Ascending aorta (tissue), 2 donors: ENCODE measurements at regions of chr3 and their contacts with region 1.

Region 1: DNA sequence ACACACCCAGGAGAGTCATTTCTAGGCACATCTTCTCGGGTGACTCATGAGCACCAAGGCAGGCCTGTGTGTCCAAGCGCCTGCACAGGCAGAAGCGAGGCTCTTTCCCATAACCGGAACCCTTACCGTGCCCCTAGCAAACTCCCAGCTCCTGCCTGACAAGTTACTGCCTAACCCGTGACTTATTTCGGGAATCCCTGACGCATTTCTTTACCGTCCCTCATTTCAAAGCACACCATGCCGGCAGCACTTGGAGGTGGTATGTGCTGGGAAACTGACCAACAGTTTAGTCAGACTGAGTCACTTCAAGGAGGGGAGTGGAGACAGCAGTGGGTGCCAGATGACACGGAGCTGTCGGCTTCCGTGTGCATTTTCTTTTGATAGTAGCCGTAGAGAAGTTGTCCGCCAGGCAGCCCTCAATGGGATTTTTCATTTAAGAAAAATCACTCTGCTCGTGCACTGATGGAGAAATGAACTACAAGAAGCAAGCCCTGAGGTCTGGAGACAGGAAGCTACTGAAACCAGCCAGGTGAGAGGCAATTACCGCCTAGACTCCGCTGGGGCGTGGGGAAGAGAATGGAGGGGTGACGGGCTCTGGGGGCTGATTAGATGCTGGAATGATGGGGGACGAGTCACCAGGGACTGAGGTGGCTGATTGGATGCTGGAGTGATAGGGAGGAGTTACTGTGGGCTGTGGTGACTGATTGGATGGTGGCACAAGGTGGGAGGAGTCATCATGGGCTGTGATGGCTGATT is 17.2 kb upstream of the HRH1 start:
- DNase-seq: peak; percentile 75 to 96
- H3K4me3 ChIP-seq: peak overlapping the region in 1 of 2 donors; percentile 54
- H3K27ac ChIP-seq: peak overlapping the region; percentile 81 to 93
- H3K4me1 ChIP-seq: peaks cover 4 to 15% of the 10 kb centered on the region in 2 donors
- H3K27me3 ChIP-seq: no peaks in the 10 kb centered on the region
- CTCF ChIP-seq: no peak

Region 2: GRCh38 chr3:10594921-10595320 is 542.1 kb before region 1 on chr3:
- intact Hi-C with region 1: no loop called
- DNase-seq: no peak
- H3K4me3 ChIP-seq: no peak overlapping the region
- H3K27ac ChIP-seq: no peak overlapping the region
- H3K4me1 ChIP-seq: no peaks in the 10 kb centered on the region
- H3K27me3 ChIP-seq: no peaks in the 10 kb centered on the region
- CTCF ChIP-seq: no peak

Region 3: DNA sequence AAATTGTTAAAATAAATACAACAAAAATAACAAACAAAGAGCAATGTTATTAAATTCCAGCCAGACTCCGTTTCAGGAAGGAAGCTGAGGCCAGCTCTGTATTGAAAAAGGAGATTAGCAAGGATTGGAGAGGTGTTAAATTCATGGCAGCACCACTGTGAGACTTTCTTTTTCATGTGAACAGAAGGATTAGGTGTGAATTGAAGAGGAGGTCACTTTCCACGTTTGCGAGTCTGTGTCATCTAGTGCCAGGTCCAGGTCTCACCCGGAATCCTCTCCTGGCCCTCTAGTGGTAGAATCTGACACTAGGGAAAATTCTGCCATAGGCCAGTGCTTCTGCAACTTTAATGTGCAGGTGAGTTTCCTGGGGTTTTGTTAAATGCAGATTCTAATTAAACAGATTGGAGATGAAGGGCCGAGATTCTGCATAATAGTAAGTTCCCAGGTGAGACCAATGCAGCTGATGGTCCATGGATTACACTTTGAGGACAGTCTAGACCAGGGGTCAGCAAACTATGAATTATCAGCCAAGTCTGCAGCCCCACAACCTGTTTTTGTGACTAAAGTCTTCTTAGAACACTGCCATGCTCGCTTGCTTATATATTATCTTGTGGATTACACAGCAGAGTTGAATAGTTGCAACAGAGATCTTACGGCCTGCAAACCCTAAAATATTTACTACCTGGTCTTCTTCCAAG is 153.7 kb before region 1 on chr3:
- intact Hi-C with region 1: no loop called
- DNase-seq: no peak
- H3K4me3 ChIP-seq: peak overlapping the region; percentile 11 to 18
- H3K27ac ChIP-seq: no peak overlapping the region
- H3K4me1 ChIP-seq: peaks cover 0 to 7% of the 10 kb centered on the region in 2 donors
- H3K27me3 ChIP-seq: no peaks in the 10 kb centered on the region
- CTCF ChIP-seq: peak in 2 of 3 experiments; percentile 58 to 65

Region 4: DNA sequence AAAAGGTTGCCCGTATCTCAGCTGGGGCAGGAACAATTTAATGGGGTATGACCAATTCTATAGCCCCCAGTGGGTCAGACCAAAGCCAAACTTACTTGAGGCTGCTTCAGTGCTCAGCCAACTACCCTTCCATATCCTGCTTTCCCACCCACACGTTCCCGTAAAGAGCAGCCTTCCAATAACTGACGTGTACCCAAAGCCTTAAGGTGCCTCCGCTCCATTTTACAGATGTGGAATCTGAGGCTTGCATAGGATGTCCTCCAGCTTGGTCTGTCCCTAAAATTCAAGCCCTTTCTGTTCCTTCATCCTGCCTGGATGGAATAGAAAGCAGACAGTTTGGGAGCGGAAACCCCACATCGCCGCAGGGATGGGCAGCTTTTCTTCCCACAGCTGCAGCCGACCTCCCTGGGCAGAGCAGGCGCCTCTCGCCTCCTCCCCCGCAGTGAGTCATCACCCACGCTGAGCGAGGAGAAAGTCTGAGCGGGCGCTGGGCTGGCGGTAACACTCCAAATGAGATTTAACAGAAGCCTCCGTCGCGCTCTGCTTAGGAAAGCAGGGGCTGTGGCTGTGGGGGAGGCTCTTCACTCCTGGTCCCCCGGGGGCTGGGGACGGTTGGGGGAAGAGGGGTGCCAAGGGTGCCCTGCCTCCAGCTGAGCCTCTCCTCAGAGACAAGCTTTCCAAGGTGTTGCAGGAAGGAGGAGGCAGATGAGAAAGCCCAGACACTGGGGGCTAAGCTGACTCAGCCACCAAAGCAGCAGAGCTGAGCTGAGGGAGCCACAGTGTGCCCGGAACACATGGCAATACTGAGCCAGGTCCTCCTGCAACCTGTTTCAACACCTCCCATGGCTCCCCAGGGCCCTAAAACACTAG is 40.5 kb before region 1 on chr3:
- intact Hi-C with region 1: loop called (anchors 1 kb)
- DNase-seq: peak; percentile 54 to 91
- H3K4me3 ChIP-seq: peak overlapping the region; percentile 39 to 51
- H3K27ac ChIP-seq: peak overlapping the region; percentile 82 to 84
- H3K4me1 ChIP-seq: peaks cover 0 to 4% of the 10 kb centered on the region in 2 donors
- H3K27me3 ChIP-seq: no peaks in the 10 kb centered on the region
- CTCF ChIP-seq: no peak

Region 5: GRCh38 chr3:11271986-11272904 is 135.2 kb after region 1 on chr3 and contains the start of gene ATG7:
- intact Hi-C with region 1: loop called (anchors 5 kb)
- DNase-seq: peak; percentile 91 to 99
- H3K4me3 ChIP-seq: peak within 1 kb of the TSS; percentile 89 to 91
- H3K27ac ChIP-seq: peak within 1 kb of the TSS; percentile 74 to 85
- H3K4me1 ChIP-seq: peaks cover 8 to 14% of the 10 kb centered on the region in 2 donors
- H3K27me3 ChIP-seq: no peaks in the 10 kb centered on the region
- CTCF ChIP-seq: no peak
- total RNA-seq, gene ATG7: 48.5 TPM

Region 6: GRCh38 chr3:11288786-11289682 is 152.0 kb after region 1 on chr3:
- intact Hi-C with region 1: loop called (anchors 1 kb)
- DNase-seq: no peak
- H3K4me3 ChIP-seq: peak overlapping the region; percentile 17 to 29
- H3K27ac ChIP-seq: peak overlapping the region; percentile 86
- H3K4me1 ChIP-seq: peaks cover 19 to 25% of the 10 kb centered on the region in 2 donors
- H3K27me3 ChIP-seq: no peaks in the 10 kb centered on the region
- CTCF ChIP-seq: no peak

Region 7: DNA sequence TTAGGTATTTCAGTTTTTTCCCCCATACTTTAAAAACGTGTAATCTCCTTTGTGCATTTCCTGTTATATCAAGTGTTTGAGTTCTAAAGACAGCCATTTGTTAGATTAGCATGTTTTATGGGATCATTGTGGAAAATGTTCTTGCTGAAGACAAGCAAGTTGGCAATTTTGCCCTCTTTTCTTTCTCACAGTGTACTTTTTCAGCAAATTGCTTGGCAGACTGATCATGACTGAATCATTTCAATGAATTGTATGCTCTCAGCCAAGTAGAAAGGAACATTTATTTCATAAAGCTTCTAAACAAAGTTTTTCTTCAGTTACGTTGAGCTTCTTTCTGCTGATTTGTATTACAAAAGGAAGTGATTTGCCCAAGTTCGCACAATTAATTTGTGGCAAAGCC is 186.8 kb after region 1 on chr3:
- intact Hi-C with region 1: loop called (anchors 5 kb)
- DNase-seq: no peak
- H3K4me3 ChIP-seq: no peak overlapping the region
- H3K27ac ChIP-seq: peak overlapping the region; percentile 64 to 72
- H3K4me1 ChIP-seq: peaks cover 0 to 12% of the 10 kb centered on the region in 2 donors
- H3K27me3 ChIP-seq: no peaks in the 10 kb centered on the region
- CTCF ChIP-seq: no peak